Activated naive CD4-positive, alpha-beta T cell treated with anti-CD3 and anti-CD28 coated beads for 36 hours (primary cell): ENCODE measurements at regions of chr14 and their contacts with region 1.

Region 1: GRCh38 chr14:58571769-58572472 is 65.8 kb upstream of the DACT1 start:
- DNase-seq: peak; percentile 78
- H3K4me3 Mint-ChIP-seq: peak overlapping the region; percentile 61
- H3K27ac Mint-ChIP-seq: peak overlapping the region; percentile 95
- H3K4me1 Mint-ChIP-seq: peaks cover 55% of the 10 kb centered on the region
- H3K27me3 Mint-ChIP-seq: no peaks in the 10 kb centered on the region

Region 2: GRCh38 chr14:58107947-58108552 is 463.9 kb before region 1 on chr14:
- CTCF ChIA-PET with region 1: no interaction called
- intact Hi-C with region 1: loop called (anchors 2 kb)
- DNase-seq: peak; percentile 65
- H3K4me3 Mint-ChIP-seq: no peak overlapping the region
- H3K27ac Mint-ChIP-seq: no peak overlapping the region
- H3K4me1 Mint-ChIP-seq: peaks cover 5% of the 10 kb centered on the region
- H3K27me3 Mint-ChIP-seq: peaks cover 7% of the 10 kb centered on the region

Region 3: GRCh38 chr14:58244556-58245387 is 327.1 kb before region 1 on chr14 and contains the start of gene PSMA3:
- CTCF ChIA-PET with region 1: interaction called, 3 read pairs
- intact Hi-C with region 1: loop called (anchors 1 kb)
- DNase-seq: peak; percentile 99
- H3K4me3 Mint-ChIP-seq: peak within 1 kb of the TSS; percentile 98
- H3K27ac Mint-ChIP-seq: peak within 1 kb of the TSS; percentile 99
- H3K4me1 Mint-ChIP-seq: peaks cover 43% of the 10 kb centered on the region
- H3K27me3 Mint-ChIP-seq: no peaks in the 10 kb centered on the region
- total RNA-seq, gene PSMA3: 399 to 424 TPM

Region 4: DNA sequence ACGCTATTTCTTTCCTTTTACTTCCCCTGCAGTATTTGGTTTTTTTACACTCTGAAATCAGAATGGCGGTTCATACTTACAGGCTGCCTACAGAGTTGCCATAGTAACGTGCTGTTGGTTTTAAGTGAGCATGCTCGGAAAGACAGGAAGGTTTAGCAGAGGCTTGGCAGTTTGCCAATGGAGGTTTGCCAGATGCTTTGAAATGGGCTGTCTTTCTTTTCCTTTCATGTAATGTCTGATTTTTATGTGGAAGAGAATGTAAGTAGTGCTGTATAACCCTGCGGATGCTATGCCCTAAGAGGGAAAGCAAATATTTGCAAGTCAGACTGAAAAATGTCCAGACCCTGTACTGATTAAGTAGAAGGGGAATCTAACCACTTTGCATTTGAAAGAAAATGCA is 240.8 kb before region 1 on chr14:
- CTCF ChIA-PET with region 1: no interaction called
- intact Hi-C with region 1: loop called (anchors 2 kb)
- DNase-seq: peak; percentile 95
- H3K4me3 Mint-ChIP-seq: peak overlapping the region; percentile 73
- H3K27ac Mint-ChIP-seq: peak overlapping the region; percentile 83
- H3K4me1 Mint-ChIP-seq: peaks cover 20% of the 10 kb centered on the region
- H3K27me3 Mint-ChIP-seq: no peaks in the 10 kb centered on the region

Region 5: DNA sequence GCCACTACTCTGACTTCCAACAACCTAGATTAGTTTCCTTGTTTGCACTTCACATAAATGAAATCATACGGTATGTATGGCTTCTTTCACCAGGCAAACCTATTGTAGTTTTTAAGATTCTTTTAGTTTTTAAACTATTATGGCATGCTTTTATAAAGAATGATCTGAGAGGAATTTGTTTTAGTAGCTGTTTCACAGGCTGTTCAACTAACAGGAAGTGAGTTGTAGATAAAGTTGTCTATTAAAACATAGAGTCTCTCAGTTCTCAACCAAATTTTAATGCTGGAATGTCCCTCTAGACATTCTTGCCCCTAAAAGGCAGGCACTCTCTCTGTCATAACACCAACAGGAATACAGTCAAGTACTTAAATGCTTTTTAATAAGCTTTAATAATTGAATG is 36.9 kb before region 1 on chr14:
- CTCF ChIA-PET with region 1: no interaction called
- intact Hi-C with region 1: loop called (anchors 2 kb)
- DNase-seq: no peak
- H3K4me3 Mint-ChIP-seq: no peak overlapping the region
- H3K27ac Mint-ChIP-seq: no peak overlapping the region
- H3K4me1 Mint-ChIP-seq: peaks cover 12% of the 10 kb centered on the region
- H3K27me3 Mint-ChIP-seq: no peaks in the 10 kb centered on the region

Region 6: DNA sequence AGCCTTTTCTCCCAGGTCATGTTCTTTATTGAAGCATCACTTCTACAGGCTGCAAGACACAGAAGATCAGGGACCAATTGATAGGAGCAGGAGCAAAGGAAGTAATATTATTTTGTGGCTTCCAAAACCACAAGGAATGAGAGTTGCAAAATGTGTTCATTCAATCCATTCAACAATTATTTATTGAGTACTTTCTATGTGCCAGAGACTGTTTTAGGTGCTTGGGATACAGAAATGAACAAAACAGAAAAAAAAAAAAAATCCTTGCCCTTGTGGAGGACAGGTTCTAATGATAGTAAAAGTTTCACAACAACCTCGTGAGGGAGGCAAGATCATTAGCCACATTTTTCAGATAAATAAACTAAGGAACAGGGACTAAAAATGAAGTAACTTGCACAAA is 45.7 kb after region 1 on chr14:
- CTCF ChIA-PET with region 1: no interaction called
- intact Hi-C with region 1: no loop called
- DNase-seq: no peak
- H3K4me3 Mint-ChIP-seq: no peak overlapping the region
- H3K27ac Mint-ChIP-seq: no peak overlapping the region
- H3K4me1 Mint-ChIP-seq: peaks cover 5% of the 10 kb centered on the region
- H3K27me3 Mint-ChIP-seq: no peaks in the 10 kb centered on the region

Region 7: GRCh38 chr14:58690801-58691516 is 119.0 kb after region 1 on chr14:
- CTCF ChIA-PET with region 1: no interaction called
- intact Hi-C with region 1: no loop called
- DNase-seq: no peak
- H3K4me3 Mint-ChIP-seq: no peak overlapping the region
- H3K27ac Mint-ChIP-seq: no peak overlapping the region
- H3K4me1 Mint-ChIP-seq: no peaks in the 10 kb centered on the region
- H3K27me3 Mint-ChIP-seq: no peaks in the 10 kb centered on the region

Region 8: GRCh38 chr14:58731465-58732330 is 159.8 kb after region 1 on chr14:
- CTCF ChIA-PET with region 1: no interaction called
- intact Hi-C with region 1: loop called (anchors 5 kb)
- DNase-seq: no peak
- H3K4me3 Mint-ChIP-seq: no peak overlapping the region
- H3K27ac Mint-ChIP-seq: no peak overlapping the region
- H3K4me1 Mint-ChIP-seq: peaks cover 23% of the 10 kb centered on the region
- H3K27me3 Mint-ChIP-seq: no peaks in the 10 kb centered on the region